Left lung (tissue), 14 donors: ENCODE measurements at regions of chr22 and their contacts with region 1.

Region 1: DNA sequence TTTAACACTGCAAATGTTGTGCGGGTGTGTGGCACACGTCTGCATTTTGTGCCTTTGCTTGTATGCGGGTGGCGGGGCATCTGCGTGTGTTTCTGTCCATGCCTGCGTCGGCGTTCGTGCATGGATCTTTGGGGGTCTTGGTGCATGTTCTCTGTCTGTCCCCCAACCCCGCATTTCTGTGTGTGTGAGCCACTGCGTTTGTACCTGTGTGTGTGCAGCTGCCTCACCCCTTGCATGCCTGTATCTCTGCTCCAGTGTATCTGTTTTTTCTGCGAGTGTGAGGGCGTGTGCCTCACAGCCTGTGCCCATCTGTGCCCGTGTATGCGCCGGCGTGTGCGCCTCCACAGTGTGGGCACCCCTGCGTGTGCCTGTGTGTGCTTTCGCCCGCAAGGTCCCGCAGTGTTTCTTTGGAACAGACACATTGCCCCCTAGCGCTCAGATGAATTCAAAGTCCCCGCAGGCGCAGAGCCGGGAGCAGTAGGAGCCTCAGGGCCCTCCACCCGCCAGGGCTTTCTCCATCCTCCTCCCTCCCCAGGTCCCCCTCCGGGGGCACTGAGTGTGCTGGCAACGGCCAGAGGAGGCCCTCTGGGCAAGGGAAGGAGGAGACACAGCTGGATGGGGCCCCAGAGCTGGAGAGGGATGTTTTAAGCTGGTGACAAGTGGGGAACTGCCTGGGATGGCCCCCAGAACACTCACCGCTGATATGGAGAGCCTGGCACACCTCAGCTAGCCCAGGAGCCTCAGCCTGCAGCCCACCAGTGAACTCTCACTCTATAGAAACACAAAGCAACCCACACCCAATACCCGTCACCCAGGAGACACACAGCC is 3.1 kb upstream of the MN1 start:
- DNase-seq: peak in 1 of 4 donors; percentile 65
- ATAC-seq: peak; percentile 68
- H3K4me3 ChIP-seq: no peak overlapping the region
- H3K27ac ChIP-seq: no peak overlapping the region
- H3K4me1 ChIP-seq: peaks cover 5 to 26% of the 10 kb centered on the region in 2 donors
- H3K27me3 ChIP-seq: peaks cover 10 to 55% of the 10 kb centered on the region in 2 donors
- CTCF ChIP-seq: peak; percentile 60 to 65

Region 2: DNA sequence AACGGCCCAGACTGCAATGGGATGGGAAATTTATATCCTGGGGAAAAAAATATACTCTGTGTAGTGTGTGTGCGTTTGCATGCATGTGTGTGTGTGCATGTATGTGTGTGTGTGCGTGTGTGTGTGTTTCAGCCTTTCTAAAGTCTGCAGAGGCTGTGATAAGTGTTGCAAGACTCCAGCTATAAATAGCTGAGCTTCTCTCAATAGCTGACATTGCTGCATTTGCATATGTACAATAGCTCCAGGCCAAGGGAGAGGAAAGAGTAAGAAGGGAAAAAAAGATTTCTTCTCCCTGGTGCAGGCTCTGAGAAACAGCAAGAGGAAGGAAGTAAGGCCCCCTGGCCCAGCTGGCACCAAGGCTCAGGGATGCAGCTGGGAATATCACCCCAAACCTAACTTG is 486.2 kb before region 1 on chr22:
- intact Hi-C with region 1: no loop called
- DNase-seq: peak in 2 of 4 donors; percentile 75 to 81
- ATAC-seq: peak; percentile 67
- H3K4me3 ChIP-seq: no peak overlapping the region
- H3K27ac ChIP-seq: no peak overlapping the region
- H3K4me1 ChIP-seq: no peaks in the 10 kb centered on the region
- H3K27me3 ChIP-seq: peaks cover 0 to 6% of the 10 kb centered on the region in 2 donors
- CTCF ChIP-seq: no peak

Region 3: GRCh38 chr22:27405672-27406388 is 398.9 kb before region 1 on chr22:
- intact Hi-C with region 1: loop called in 1 of 2 experiments (anchors 10 kb)
- DNase-seq: peak in 2 of 4 donors; percentile 30 to 79
- ATAC-seq: peak; percentile 93
- H3K4me3 ChIP-seq: no peak overlapping the region
- H3K27ac ChIP-seq: no peak overlapping the region
- H3K4me1 ChIP-seq: no peaks in the 10 kb centered on the region
- H3K27me3 ChIP-seq: peaks cover 0 to 11% of the 10 kb centered on the region in 2 donors
- CTCF ChIP-seq: peak; percentile 63 to 64